K562 (cell line): ENCODE measurements at regions of chr14 and their contacts with region 1.

Region 1: DNA sequence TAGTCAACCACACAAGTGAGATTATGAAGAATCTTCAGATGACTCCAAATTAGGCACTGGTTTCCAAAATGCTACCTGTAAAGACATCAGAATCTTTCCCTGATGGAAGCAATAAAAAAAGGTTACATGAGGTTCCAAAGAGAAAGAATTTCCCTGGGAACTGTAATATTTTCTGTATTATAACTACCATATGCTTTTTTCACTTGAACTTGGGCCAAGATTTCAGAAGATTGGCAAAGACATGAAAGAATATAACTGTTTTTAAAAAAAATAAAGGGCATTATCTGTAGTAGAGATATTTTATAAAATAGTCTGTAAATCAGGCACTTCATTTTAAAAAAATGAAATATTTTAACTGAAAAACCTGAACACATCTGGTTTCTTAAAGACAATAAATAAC is 12.9 kb downstream of the HECTD1 start:
- DNase-seq: no peak
- ATAC-seq: no peak
- H3K4me3 ChIP-seq: no peak overlapping the region
- H3K27ac ChIP-seq: no peak overlapping the region
- H3K4me1 ChIP-seq: peaks cover 0 to 26% of the 10 kb centered on the region in 2 experiments; a peak in 4 of 5 replicates
- H3K27me3 ChIP-seq: no peaks in the 10 kb centered on the region
- CTCF ChIP-seq: no peak
- EP300 ChIP-seq: no peak
- POLR2A ChIP-seq: no peak
- RAD21 ChIP-seq: no peak

Region 2: GRCh38 chr14:31059152-31059924 is 135.3 kb before region 1 on chr14:
- CTCF ChIA-PET with region 1: no interaction called
- POLR2A ChIA-PET with region 1: no interaction called
- in situ Hi-C with region 1: no loop called
- intact Hi-C with region 1: no loop called
- DNase-seq: peak; percentile 72 to 96 (median 82)
- ATAC-seq: peak; percentile 86
- H3K4me3 ChIP-seq: no peak overlapping the region
- H3K27ac ChIP-seq: peak overlapping the region; percentile 82
- H3K4me1 ChIP-seq: peaks cover 14 to 36% of the 10 kb centered on the region in 2 experiments; a peak in 4 of 5 replicates
- H3K27me3 ChIP-seq: no peaks in the 10 kb centered on the region
- CTCF ChIP-seq: no peak
- EP300 ChIP-seq: peak; percentile 99
- POLR2A ChIP-seq: no peak
- RAD21 ChIP-seq: peak; percentile 10 to 33; a peak in 2 of 4 replicates

Region 3: DNA sequence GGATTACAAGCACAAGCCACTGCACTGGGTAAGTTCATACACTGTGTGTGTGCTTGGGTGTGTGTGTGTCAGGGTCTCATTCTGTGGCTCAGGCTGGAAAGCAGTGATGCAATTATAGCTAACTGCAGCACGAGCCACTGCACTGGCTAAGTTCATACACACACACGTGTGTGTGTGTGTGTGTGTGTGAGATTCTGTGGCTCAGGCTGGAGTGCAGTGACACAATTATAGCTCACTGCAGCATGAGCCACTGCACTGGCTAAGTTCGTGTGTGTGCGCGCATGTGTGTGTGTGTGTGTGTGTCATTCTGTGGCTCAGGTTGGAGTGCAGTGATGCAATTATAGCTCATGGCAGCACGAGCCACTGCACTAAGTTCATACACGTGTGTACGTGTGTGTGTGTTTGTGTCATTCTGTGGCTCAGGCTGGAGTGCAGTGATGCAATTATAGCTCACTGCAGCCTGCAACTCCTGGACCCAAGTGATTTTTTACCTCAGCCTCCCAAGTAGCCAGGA is 72.5 kb before region 1 on chr14:
- CTCF ChIA-PET with region 1: no interaction called
- POLR2A ChIA-PET with region 1: no interaction called
- in situ Hi-C with region 1: no loop called
- intact Hi-C with region 1: no loop called
- DNase-seq: no peak
- ATAC-seq: no peak; the same call in 2 of the 3 replicates
- H3K4me3 ChIP-seq: no peak overlapping the region
- H3K27ac ChIP-seq: no peak overlapping the region
- H3K4me1 ChIP-seq: no peaks in the 10 kb centered on the region
- H3K27me3 ChIP-seq: no peaks in the 10 kb centered on the region
- CTCF ChIP-seq: no peak
- EP300 ChIP-seq: no peak
- POLR2A ChIP-seq: no peak
- RAD21 ChIP-seq: no peak

Region 4: DNA sequence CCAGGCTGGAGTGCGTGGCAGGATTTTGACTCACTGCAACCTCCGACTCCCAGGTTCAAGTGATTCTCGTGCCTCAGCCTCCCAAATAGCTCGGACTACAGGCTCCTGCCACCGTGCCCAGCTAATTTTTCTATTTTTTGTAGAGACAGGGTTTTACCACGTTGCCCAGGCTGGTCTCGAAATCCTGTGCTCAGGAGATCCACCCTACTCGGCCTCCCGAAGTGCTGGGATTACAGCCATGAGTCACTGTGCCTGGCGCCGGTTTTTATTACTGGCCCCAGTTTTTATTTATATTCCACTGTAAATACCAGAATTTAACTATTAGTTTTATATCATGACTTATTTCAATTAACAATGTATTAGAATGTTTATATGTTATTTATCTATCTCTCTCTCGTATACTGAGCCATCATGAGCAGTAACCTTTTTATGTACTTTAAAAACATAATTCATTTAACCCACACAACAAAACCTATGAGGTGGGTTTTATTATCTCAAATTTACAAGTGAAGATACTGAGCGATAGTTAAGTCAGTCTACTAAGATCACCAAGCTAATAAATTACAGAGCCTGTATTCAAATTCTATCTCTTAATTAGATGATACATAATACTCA is 34.9 kb before region 1 on chr14:
- CTCF ChIA-PET with region 1: no interaction called
- POLR2A ChIA-PET with region 1: no interaction called
- in situ Hi-C with region 1: no loop called
- intact Hi-C with region 1: loop called (anchors 5 kb)
- DNase-seq: no peak
- ATAC-seq: no peak
- H3K4me3 ChIP-seq: no peak overlapping the region
- H3K27ac ChIP-seq: no peak overlapping the region
- H3K4me1 ChIP-seq: no peaks in the 10 kb centered on the region
- H3K27me3 ChIP-seq: no peaks in the 10 kb centered on the region
- CTCF ChIP-seq: no peak
- EP300 ChIP-seq: no peak
- POLR2A ChIP-seq: no peak
- RAD21 ChIP-seq: no peak

Region 5: GRCh38 chr14:31243860-31244259 is 49.2 kb after region 1 on chr14:
- CTCF ChIA-PET with region 1: no interaction called
- POLR2A ChIA-PET with region 1: no interaction called
- in situ Hi-C with region 1: no loop called
- intact Hi-C with region 1: no loop called
- DNase-seq: peak in 1 of 4 experiments; percentile 70
- ATAC-seq: peak; percentile 66
- H3K4me3 ChIP-seq: no peak overlapping the region
- H3K27ac ChIP-seq: peak overlapping the region; percentile 64; the same call in 2 of the 3 replicates
- H3K4me1 ChIP-seq: peaks cover 0 to 34% of the 10 kb centered on the region in 2 experiments; a peak in 3 of 5 replicates
- H3K27me3 ChIP-seq: no peaks in the 10 kb centered on the region
- CTCF ChIP-seq: no peak
- EP300 ChIP-seq: peak; percentile 14; the same call in 1 of the 2 replicates
- POLR2A ChIP-seq: no peak
- RAD21 ChIP-seq: no peak